Dorsolateral prefrontal cortex (tissue), 120 donors: ENCODE measurements at regions of chr4 and their contacts with region 1.

Region 1: DNA sequence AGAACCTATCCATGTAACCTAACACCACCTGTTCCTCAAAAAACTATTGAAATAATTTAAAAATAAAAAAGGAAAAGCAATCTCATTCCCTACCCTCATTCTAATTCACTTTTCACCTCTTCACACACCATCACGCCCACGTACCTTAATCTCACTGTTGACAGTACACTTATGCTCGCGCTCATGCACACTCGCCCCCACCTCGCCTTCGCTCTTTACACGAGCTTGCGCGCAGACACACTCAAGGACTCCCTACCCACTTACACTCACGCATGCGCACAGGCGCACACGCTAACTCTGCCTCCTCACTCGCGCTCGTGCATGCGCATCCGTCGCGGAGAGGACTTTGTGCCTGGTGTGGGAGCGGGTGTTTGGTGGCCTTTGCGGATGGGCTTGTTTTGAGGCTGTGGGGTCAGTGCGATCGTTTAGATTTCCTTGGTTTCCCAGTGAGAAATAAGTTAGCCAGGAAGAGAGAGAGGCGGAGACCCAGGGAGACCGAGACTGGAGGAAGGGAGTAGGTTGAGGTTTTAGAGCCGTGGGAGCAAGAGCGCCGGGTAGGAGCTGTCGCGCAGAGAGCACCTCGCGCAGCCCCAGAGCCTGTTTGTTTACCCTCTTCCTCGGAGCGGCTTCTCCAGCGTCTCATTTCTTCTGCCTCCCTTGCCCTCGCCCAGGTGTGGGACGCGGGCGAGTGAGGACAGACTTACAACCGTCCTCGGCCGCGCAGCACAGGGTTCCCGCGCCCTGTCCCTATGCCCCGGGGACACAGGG is 8.1 kb upstream of the GSX2 start:
- DNase-seq: peak; percentile 50 to 86 (median 74)
- H3K4me3 ChIP-seq: peak overlapping the region; percentile 36 to 73 (median 57)
- H3K27ac ChIP-seq: peak overlapping the region in 22 of 59 donors; percentile 10 to 55 (median 32)
- H3K27me3 ChIP-seq: peaks cover 0 to 91% (median 37%) of the 10 kb centered on the region in 45 donors
- CTCF ChIP-seq: no peak

Region 2: DNA sequence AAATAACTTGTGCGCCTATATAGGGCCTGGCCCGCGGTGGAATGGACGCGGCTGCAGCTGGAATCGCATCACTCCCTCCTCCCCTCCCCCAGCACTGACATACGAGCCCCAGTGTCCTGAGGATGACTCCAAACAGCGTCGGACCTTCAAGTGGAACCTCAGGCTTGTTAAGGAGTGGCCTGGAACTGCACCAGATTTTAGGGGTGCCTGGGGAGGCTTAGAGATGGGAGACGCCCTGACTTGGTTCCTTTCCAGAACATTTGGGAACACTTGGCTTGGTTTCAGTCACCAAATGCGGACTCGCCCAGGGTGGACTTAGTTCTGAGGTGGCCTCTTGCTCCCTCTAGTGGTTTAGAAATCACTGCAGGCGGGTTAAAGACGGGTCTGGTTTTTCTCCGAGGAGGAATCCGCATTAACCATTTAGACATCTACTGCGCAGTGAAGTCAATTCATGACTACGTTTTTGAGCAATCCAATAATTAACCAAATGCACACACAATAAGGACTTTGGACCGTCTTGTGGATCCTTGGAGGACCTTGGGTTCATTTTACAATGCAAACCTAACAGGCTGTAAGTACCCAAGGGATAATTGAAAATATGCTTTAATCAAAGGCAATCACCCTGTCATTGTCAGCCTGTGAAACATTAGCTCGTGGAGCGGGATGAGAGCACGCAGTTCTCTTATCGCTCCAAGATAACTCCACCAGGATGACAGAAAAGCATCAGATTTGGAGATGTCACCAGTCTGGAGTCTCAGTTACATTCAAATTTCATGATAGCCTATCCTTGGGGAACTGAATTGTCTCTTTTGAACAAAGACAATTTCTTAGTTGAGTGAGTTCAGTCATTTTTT is 126.0 kb after region 1 on chr4:
- intact Hi-C with region 1: loop called (anchors 10 kb)
- DNase-seq: peak in 8 of 10 donors; percentile 42 to 77 (median 62)
- H3K4me3 ChIP-seq: peak overlapping the region; percentile 26 to 73 (median 55)
- H3K27ac ChIP-seq: peak overlapping the region in 3 of 59 donors; percentile 4 to 23 (median 11)
- H3K27me3 ChIP-seq: peaks cover 0 to 41% (median 0%) of the 10 kb centered on the region in 45 donors
- CTCF ChIP-seq: peak; percentile 83 to 97 (median 92)

Region 3: DNA sequence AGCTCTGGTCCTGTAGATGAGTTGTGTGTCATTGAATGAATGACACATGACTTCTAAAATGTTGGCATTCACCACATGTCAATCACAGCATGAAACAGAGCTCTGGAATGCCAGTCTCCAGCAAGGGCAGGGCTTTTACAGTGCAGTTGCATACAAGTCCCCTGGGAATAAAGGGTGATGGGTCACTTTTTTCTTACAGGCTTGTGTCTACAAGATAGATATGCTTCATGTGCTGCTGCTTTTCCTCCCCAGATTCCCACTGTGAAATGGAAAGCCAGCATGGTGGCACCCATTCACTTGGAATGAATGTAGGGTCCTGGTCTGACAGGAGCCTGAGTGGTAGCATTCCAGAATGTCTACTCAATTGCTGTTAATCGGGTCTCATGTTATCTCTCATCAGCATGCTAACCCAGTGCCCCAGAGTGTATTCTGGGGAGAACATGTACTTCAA is 406.9 kb after region 1 on chr4:
- intact Hi-C with region 1: no loop called
- DNase-seq: no peak
- H3K4me3 ChIP-seq: no peak overlapping the region
- H3K27ac ChIP-seq: no peak overlapping the region
- H3K27me3 ChIP-seq: peaks cover 0 to 5% (median 0%) of the 10 kb centered on the region in 45 donors
- CTCF ChIP-seq: no peak